ENCODE measurements at regions of chr3 and their contacts with region 1.

Region 1: DNA sequence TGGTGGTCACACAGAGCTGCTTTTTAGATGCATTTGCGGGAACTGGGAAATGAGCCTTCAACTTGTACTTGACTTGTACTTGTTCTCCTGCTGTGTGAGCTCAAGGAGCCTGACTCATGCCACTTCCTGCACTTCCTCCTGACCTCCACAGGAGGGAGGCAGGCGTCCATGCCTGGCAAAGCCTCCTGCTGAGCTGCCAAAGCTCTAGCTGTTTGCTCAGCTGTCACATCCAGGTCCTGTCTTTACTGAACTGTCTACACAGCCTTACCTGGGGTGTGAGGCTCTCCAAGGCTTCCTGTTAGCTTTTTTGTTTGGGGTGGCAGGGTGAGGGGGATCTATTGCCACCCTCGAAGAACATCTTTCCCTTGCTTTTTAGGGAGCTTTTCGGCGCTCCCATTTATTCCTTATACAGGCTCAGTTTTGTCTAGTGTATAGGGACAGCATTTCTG is 6.4 kb downstream of the THPO start:
- DNase-seq: peak; percentile 87 to 95 (median 92)
- ATAC-seq: peak; percentile 99
- H3K4me3 ChIP-seq: no peak overlapping the region
- H3K27ac ChIP-seq: peak overlapping the region in 1 of 4 donors; percentile 9
- H3K4me1 ChIP-seq: peaks cover 20% of the 10 kb centered on the region
- H3K27me3 ChIP-seq: no peaks in the 10 kb centered on the region
- CTCF ChIP-seq: peak; percentile 92 to 99 (median 99)
- POLR2A ChIP-seq: no peak

Region 2: GRCh38 chr3:184543843-184544512 is 172.4 kb after region 1 on chr3:
- intact Hi-C with region 1: loop called (anchors 5 kb)
- DNase-seq: peak; percentile 88 to 91 (median 88)
- ATAC-seq: peak; percentile 83
- H3K4me3 ChIP-seq: no peak overlapping the region
- H3K27ac ChIP-seq: no peak overlapping the region
- H3K4me1 ChIP-seq: peaks cover 10% of the 10 kb centered on the region
- H3K27me3 ChIP-seq: peaks cover 0 to 7% of the 10 kb centered on the region in 2 donors
- CTCF ChIP-seq: peak; percentile 77 to 93 (median 91)
- POLR2A ChIP-seq: no peak

Measured in body of pancreas (tissue), 4 donors.